K562 (cell line): ENCODE measurements at regions of chr3 and their contacts with region 1.

Region 1: GRCh38 chr3:132641837-132642538 is 17.6 kb downstream of the ACAD11 start:
- DNase-seq: peak; percentile 28 to 41 (median 36)
- ATAC-seq: peak; percentile 74
- H3K4me3 ChIP-seq: no peak overlapping the region
- H3K27ac ChIP-seq: no peak overlapping the region
- H3K4me1 ChIP-seq: no peaks in the 10 kb centered on the region
- H3K27me3 ChIP-seq: no peaks in the 10 kb centered on the region
- CTCF ChIP-seq: peak in 2 of 3 experiments; percentile 48 to 73; a peak in 3 of 6 replicates
- EP300 ChIP-seq: no peak
- POLR2A ChIP-seq: no peak
- RAD21 ChIP-seq: peak; percentile 73 to 79

Region 2: DNA sequence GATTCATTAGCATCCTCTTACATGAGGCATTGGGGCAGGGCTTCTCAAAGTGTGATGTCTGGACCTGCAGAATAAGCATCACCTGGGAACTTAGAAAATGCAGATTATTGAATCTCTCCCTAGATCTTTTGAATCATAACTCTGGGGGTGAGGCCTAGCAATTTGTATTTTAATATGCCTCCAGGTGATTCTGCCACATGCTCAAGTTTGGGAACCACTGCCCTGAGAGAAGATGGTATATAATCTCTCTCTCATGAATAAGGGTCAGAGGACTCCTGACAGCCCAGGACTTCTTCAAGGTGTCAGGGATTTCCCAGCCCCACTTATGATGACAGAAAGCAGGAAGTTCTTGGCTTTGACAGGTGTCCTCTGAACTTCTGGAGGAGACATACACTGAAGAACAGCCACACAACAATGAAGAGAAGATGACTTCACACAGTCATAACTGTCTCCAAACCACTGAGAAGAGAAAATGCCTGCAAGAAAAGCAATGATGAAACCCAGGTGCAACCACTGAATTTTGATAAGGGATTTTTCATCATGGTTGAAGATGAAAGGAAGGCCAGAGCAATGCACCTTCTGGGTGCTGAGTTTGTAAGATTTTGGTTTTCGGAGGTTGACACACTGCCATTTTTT is 927.3 kb before region 1 on chr3:
- CTCF ChIA-PET with region 1: no interaction called
- POLR2A ChIA-PET with region 1: no interaction called
- in situ Hi-C with region 1: no loop called
- intact Hi-C with region 1: no loop called
- DNase-seq: no peak
- ATAC-seq: no peak
- H3K4me3 ChIP-seq: no peak overlapping the region
- H3K27ac ChIP-seq: no peak overlapping the region
- H3K4me1 ChIP-seq: no peaks in the 10 kb centered on the region; a peak in 1 of 5 replicates
- H3K27me3 ChIP-seq: no peaks in the 10 kb centered on the region
- CTCF ChIP-seq: no peak
- EP300 ChIP-seq: no peak
- POLR2A ChIP-seq: no peak
- RAD21 ChIP-seq: no peak

Region 3: DNA sequence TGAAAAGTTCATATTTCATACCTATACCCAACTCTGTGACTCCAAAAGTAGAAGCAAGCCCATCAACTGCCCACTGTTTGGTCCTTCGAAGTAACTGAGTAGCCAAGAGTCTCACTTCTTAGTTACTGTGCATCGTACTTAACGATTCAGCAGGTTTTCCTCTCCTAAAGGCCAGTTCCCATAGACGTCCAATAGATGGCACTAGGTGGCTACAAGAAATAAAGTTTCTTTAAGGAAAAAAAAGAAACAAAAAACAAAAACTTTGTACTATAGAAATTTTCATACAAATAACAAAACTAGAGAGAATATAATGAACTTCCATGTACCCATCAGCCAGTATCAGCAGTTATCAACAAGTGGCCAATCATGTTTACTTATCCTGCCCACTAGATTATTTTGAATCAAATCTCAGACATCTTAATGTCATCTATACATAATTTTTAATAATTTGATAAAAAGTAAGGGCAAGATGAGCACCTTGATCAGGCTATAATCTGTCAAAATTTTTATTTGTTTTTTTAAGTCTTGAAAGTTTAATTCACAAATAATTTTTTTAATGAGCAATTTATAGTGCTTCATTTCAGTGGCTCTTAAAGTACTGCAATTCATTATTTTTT is 388.6 kb before region 1 on chr3:
- CTCF ChIA-PET with region 1: no interaction called
- POLR2A ChIA-PET with region 1: no interaction called
- in situ Hi-C with region 1: no loop called
- intact Hi-C with region 1: loop called (anchors 10 kb)
- DNase-seq: peak in 3 of 4 experiments; percentile 11 to 54 (median 32)
- ATAC-seq: peak; percentile 67; the same call in 2 of the 3 replicates
- H3K4me3 ChIP-seq: no peak overlapping the region
- H3K27ac ChIP-seq: no peak overlapping the region
- H3K4me1 ChIP-seq: no peaks in the 10 kb centered on the region
- H3K27me3 ChIP-seq: no peaks in the 10 kb centered on the region
- CTCF ChIP-seq: peak; percentile 50 to 67 (median 51); a peak in 5 of 6 replicates
- EP300 ChIP-seq: no peak
- POLR2A ChIP-seq: no peak
- RAD21 ChIP-seq: peak; percentile 50 to 56

Region 4: GRCh38 chr3:132352541-132353143 is 289.3 kb before region 1 on chr3:
- CTCF ChIA-PET with region 1: no interaction called
- POLR2A ChIA-PET with region 1: no interaction called
- in situ Hi-C with region 1: no loop called
- intact Hi-C with region 1: loop called (anchors 5 kb)
- DNase-seq: peak; percentile 62 to 65 (median 64)
- ATAC-seq: peak; percentile 79
- H3K4me3 ChIP-seq: no peak overlapping the region
- H3K27ac ChIP-seq: no peak overlapping the region
- H3K4me1 ChIP-seq: no peaks in the 10 kb centered on the region
- H3K27me3 ChIP-seq: peaks cover 0 to 5% of the 10 kb centered on the region in 2 experiments; a peak in 1 of 5 replicates
- CTCF ChIP-seq: peak; percentile 68 to 77 (median 75)
- EP300 ChIP-seq: no peak
- POLR2A ChIP-seq: no peak
- RAD21 ChIP-seq: peak; percentile 78 to 83

Region 5: GRCh38 chr3:132535575-132536441 is 106.2 kb before region 1 on chr3:
- CTCF ChIA-PET with region 1: interaction called, 49 read pairs
- POLR2A ChIA-PET with region 1: no interaction called
- in situ Hi-C with region 1: loop called (anchors 5 kb)
- intact Hi-C with region 1: loop called (anchors 1 kb)
- DNase-seq: peak; percentile 37 to 71 (median 46)
- ATAC-seq: peak; percentile 90
- H3K4me3 ChIP-seq: no peak overlapping the region
- H3K27ac ChIP-seq: peak overlapping the region; percentile 46; the same call in 1 of the 3 replicates
- H3K4me1 ChIP-seq: no peaks in the 10 kb centered on the region
- H3K27me3 ChIP-seq: no peaks in the 10 kb centered on the region
- CTCF ChIP-seq: peak; percentile 51 to 66 (median 54)
- EP300 ChIP-seq: no peak
- POLR2A ChIP-seq: no peak
- RAD21 ChIP-seq: peak; percentile 66 to 70

Region 6: GRCh38 chr3:132543036-132543739 is 98.8 kb before region 1 on chr3:
- CTCF ChIA-PET with region 1: no interaction called
- POLR2A ChIA-PET with region 1: no interaction called
- in situ Hi-C with region 1: loop called (anchors 5 kb)
- intact Hi-C with region 1: no loop called
- DNase-seq: peak in 1 of 4 experiments; percentile 21
- ATAC-seq: no peak
- H3K4me3 ChIP-seq: no peak overlapping the region
- H3K27ac ChIP-seq: no peak overlapping the region
- H3K4me1 ChIP-seq: no peaks in the 10 kb centered on the region; a peak in 1 of 5 replicates
- H3K27me3 ChIP-seq: no peaks in the 10 kb centered on the region
- CTCF ChIP-seq: no peak
- EP300 ChIP-seq: no peak
- POLR2A ChIP-seq: no peak
- RAD21 ChIP-seq: no peak